Psoas muscle (tissue), 8 donors: ENCODE measurements at regions of chr3 and their contacts with region 1.

Region 1: DNA sequence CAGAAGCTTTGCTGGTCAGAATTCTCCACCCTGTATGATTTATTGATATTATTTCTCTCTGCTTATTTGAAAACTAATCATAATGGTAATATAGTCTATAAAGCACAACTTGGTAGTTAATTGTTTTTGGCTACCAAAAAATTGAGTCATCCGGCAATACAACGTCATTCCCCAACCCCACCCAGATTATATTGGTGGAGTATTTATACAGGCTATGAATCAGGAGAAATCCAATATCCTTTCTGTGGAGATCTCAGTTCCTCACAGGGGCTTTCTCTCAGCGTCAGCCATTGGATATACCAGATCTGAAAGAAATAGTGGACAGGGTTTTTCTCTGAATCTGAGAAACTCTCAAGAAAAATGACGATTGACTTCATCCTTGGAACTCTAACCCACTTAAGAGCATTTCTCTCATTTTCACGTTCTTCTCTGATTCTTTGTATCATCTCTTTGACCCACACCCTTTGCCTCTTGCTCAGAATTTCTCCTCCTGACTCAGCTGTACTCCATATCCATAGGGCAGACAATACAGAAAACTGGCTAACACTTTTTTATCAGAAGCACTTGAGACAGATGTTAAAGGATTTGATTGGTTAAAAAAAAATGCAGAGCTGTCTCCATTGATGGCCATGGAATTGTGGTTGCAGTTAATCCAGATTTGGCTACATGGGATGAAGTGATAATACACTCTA is 1055.8 kb upstream of the CADM2 start:
- DNase-seq: no peak
- ATAC-seq: no peak
- H3K4me3 ChIP-seq: no peak overlapping the region
- H3K27ac ChIP-seq: no peak overlapping the region
- H3K4me1 ChIP-seq: no peaks in the 10 kb centered on the region
- H3K27me3 ChIP-seq: no peaks in the 10 kb centered on the region
- CTCF ChIP-seq: no peak

Region 2: GRCh38 chr3:83729576-83729975 is 173.4 kb before region 1 on chr3:
- intact Hi-C with region 1: loop called in 1 of 2 experiments (anchors 5 kb)
- DNase-seq: no peak
- ATAC-seq: no peak
- H3K4me3 ChIP-seq: no peak overlapping the region
- H3K27ac ChIP-seq: no peak overlapping the region
- H3K4me1 ChIP-seq: no peaks in the 10 kb centered on the region
- H3K27me3 ChIP-seq: no peaks in the 10 kb centered on the region
- CTCF ChIP-seq: no peak

Region 3: DNA sequence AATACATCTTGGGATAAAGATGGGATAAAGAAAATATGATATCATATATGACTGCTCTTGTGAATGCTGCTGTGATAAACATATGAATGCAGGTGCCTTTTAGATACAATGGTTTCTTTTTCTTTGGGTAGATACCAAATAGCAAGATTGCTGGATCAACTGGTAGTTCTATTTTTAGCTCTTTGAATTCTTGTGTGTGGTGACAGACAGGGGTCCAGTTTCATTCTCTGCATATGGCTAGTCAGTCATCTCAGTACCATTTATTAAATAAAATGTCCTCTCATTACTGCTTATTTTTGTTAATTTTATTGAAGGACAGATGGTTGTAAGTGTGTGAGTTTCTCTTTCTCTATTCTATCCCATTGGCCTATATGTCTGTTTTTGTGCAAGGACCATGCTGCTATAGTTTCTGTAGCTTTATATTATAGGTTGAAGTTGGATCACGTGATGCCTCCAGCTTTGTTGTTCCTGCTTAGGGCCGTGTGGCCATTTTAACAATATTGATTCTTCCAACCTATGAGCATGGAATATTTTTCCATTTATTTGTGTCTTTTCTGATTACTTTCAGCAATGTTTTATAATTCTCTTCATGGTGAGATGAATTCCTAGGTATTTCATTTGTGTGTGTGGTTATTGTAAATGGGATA is 34.0 kb before region 1 on chr3:
- intact Hi-C with region 1: no loop called
- DNase-seq: no peak
- ATAC-seq: peak in 3 of 4 donors; percentile 65 to 73 (median 67)
- H3K4me3 ChIP-seq: peak overlapping the region; percentile 20
- H3K27ac ChIP-seq: no peak overlapping the region
- H3K4me1 ChIP-seq: peaks cover 11% of the 10 kb centered on the region
- H3K27me3 ChIP-seq: no peaks in the 10 kb centered on the region
- CTCF ChIP-seq: no peak

Region 4: GRCh38 chr3:84023842-84024241 is 120.9 kb after region 1 on chr3:
- intact Hi-C with region 1: no loop called
- DNase-seq: no peak
- ATAC-seq: no peak
- H3K4me3 ChIP-seq: no peak overlapping the region
- H3K27ac ChIP-seq: no peak overlapping the region
- H3K4me1 ChIP-seq: no peaks in the 10 kb centered on the region
- H3K27me3 ChIP-seq: no peaks in the 10 kb centered on the region
- CTCF ChIP-seq: no peak

Region 5: GRCh38 chr3:84039099-84039498 is 136.1 kb after region 1 on chr3:
- intact Hi-C with region 1: no loop called
- DNase-seq: no peak
- ATAC-seq: no peak
- H3K4me3 ChIP-seq: no peak overlapping the region
- H3K27ac ChIP-seq: no peak overlapping the region
- H3K4me1 ChIP-seq: no peaks in the 10 kb centered on the region
- H3K27me3 ChIP-seq: no peaks in the 10 kb centered on the region
- CTCF ChIP-seq: no peak

Region 6: DNA sequence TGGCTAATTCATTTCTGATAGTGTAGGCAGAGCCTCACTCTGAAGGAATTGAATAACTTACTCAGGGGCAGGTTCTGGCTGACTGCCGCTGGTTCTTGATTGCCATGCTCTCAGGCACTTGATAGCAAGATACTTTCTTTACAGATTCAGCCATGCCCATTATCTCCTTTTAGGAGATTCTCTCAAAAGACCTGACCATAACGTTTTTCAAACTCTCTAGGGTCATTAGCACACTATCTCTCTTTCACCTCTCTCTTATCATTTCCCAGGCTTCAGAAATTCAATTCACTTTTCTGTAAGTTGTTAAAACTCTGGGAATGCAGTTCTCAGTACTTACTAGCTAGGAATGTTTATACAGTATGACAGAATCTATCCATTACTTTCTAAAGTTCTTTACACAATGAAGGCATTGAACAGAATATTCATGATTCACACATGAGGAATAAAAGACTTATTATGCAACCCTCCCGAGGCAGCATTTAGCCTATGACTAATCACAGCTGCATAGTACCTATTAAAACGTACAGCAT is 205.5 kb after region 1 on chr3:
- intact Hi-C with region 1: no loop called
- DNase-seq: no peak
- ATAC-seq: no peak
- H3K4me3 ChIP-seq: no peak overlapping the region
- H3K27ac ChIP-seq: no peak overlapping the region
- H3K4me1 ChIP-seq: no peaks in the 10 kb centered on the region
- H3K27me3 ChIP-seq: no peaks in the 10 kb centered on the region
- CTCF ChIP-seq: no peak